ENCODE measurements at regions of chr10 and their contacts with region 1.

Region 1: DNA sequence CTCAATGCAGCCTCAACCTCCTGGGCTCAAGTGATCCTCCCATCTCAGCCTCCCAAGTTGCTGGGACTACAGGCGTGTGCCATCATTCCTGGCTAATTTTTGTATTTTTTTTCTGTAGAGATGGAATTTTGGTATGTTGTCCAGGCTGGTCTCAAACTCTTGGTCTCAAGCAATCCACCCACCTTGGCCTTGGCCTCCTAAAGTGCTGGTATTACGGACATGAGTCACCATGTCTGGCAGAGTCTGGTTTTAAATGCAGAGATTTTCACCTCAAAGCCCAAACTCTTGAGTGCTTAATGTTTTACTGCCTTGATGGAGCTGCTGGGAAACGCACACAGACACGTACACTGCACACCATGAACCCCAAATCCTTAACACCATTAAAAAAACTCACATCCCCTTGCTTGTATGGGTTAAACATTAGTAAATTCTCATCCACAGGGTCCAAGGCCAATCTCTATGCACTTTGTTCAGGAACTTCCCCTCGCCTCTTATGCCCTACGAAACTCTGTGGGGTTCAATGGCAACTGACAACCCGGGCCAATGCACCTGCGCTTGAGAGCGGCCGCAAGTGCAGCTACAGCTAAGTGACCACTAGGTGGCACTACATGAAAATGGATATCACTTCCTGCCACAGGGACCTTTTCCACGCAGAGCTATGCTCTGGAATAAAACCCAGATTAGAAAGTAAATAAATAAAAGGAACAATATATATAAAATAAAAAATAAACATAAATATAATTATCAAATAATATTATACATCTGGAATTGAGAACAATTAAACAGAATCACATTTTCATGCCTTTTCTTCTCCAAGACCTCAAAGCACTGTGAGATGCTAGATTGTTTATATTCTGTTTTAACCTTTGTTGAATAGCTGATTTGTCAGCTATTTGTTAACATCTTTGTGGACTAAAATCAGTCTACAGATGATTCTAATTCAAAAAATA is 66.9 kb upstream of the AFAP1L2 start:
- DNase-seq: peak; percentile 46
- H3K4me3 ChIP-seq: no peak overlapping the region
- H3K27ac ChIP-seq: no peak overlapping the region
- H3K27me3 ChIP-seq: peaks cover 2% of the 10 kb centered on the region
- CTCF ChIP-seq: peak; percentile 88

Region 2: DNA sequence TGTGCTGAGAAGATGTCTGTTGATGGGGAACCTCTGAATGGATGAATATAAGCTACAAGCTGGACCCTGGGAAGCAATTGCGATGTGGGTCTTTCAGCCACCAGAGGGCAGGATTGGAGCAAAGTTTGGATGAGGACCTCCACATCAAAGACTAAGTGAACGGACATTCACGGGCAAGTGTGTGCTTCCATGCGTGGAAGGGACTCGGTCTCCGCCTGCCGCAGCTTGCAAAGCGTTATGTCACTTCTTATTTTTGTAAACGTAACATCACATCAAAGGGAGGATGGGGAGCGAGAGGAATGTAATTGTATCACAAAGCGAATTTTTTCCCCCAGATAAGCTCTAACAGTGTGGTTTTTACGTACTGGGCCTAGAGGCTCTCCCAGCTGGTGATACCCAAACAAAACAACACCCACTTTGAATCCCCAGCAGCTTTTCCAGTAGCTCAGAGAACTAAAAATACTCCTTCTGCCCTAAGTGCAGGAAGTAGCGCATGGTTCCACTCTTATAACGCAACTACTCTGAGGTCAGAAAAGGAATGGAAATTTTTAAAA is 167.1 kb before region 1 on chr10:
- CTCF ChIA-PET with region 1: interaction called, 22 read pairs
- POLR2A ChIA-PET with region 1: no interaction called
- DNase-seq: peak; percentile 73
- H3K4me3 ChIP-seq: peak overlapping the region; percentile 44
- H3K27ac ChIP-seq: peak overlapping the region; percentile 57
- H3K27me3 ChIP-seq: peaks cover 14% of the 10 kb centered on the region
- CTCF ChIP-seq: peak; percentile 85

Region 3: GRCh38 chr10:114458955-114459354 is 12.3 kb before region 1 on chr10:
- CTCF ChIA-PET with region 1: interaction called, 20 read pairs
- POLR2A ChIA-PET with region 1: no interaction called
- DNase-seq: no peak
- H3K4me3 ChIP-seq: no peak overlapping the region
- H3K27ac ChIP-seq: no peak overlapping the region
- H3K27me3 ChIP-seq: no peaks in the 10 kb centered on the region
- CTCF ChIP-seq: peak; percentile 20; the same call in 1 of the 2 replicates

Region 4: DNA sequence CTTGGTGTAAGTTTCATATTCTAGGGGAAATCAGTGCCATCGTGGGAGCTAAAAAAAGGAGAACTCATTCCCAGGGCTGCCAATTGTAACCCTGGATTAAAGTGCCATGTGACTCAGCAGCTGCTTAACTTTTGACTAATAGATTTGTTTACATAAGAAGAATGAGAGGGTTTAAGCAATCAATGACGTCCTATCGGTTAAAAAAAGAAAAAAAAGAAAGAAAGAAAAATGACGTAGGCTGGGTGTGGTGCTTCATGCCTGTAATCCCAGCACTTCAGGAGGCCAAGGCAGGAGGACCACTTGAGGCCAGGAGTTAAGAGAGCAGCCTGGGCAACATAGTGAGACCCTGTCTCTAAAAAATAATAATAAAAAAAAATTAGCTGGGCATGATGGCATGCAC is 49.2 kb after region 1 on chr10:
- CTCF ChIA-PET with region 1: interaction called, 16 read pairs
- POLR2A ChIA-PET with region 1: no interaction called
- DNase-seq: no peak
- H3K4me3 ChIP-seq: no peak overlapping the region
- H3K27ac ChIP-seq: no peak overlapping the region
- H3K27me3 ChIP-seq: peaks cover 15% of the 10 kb centered on the region
- CTCF ChIP-seq: no peak

Region 5: DNA sequence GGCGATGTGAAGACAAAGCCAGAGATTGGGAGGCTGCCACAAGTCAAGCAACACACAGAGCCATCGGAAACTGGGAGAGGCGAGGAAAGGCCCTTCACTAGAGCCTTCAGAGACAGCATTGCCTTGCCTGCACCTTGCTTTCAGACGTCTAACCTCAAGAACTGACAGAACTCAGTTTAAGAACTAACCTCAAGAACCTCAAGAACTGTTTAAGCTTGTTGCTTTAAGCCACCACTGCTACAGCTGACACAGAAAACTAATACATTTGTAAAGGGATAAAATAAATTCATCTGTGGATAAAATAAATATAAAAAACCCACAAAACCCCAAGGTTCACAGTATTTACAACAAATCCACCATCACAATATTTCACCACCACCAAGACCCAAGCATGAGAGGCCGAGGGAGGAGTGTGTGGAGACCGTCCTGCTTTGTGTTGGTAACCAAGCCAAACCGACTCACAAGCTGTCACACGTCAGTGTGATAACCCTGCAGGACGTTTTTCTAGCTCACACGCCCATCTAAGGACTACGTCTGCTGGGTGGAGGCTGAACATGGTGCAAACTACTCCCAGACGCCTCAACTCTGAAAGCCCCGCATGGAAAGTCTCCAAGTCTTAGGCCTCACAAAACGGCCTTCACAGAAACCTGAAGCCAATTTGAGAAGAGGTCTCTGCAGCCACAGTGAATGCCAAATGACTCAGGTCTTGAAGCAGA is 70.0 kb after region 1 on chr10:
- CTCF ChIA-PET with region 1: interaction called, 92 read pairs
- POLR2A ChIA-PET with region 1: no interaction called
- DNase-seq: peak; percentile 80
- H3K4me3 ChIP-seq: no peak overlapping the region
- H3K27ac ChIP-seq: no peak overlapping the region
- H3K27me3 ChIP-seq: peaks cover 53% of the 10 kb centered on the region
- CTCF ChIP-seq: no peak

Region 6: GRCh38 chr10:114631666-114632417 is 160.6 kb after region 1 on chr10:
- CTCF ChIA-PET with region 1: no interaction called
- POLR2A ChIA-PET with region 1: no interaction called
- DNase-seq: no peak
- H3K4me3 ChIP-seq: peak overlapping the region; percentile 67
- H3K27ac ChIP-seq: no peak overlapping the region
- H3K27me3 ChIP-seq: no peaks in the 10 kb centered on the region
- CTCF ChIP-seq: no peak

Region 7: GRCh38 chr10:114779803-114780609 is 308.8 kb after region 1 on chr10:
- CTCF ChIA-PET with region 1: interaction called, 12 read pairs
- POLR2A ChIA-PET with region 1: no interaction called
- DNase-seq: peak; percentile 59
- H3K4me3 ChIP-seq: no peak overlapping the region
- H3K27ac ChIP-seq: peak overlapping the region; percentile 62
- H3K27me3 ChIP-seq: no peaks in the 10 kb centered on the region
- CTCF ChIP-seq: no peak

Region 8: GRCh38 chr10:114876602-114877300 is 405.5 kb after region 1 on chr10:
- CTCF ChIA-PET with region 1: interaction called, 18 read pairs
- POLR2A ChIA-PET with region 1: no interaction called
- DNase-seq: no peak
- H3K4me3 ChIP-seq: no peak overlapping the region
- H3K27ac ChIP-seq: no peak overlapping the region
- H3K27me3 ChIP-seq: no peaks in the 10 kb centered on the region
- CTCF ChIP-seq: peak; percentile 88

Measured in AG04450 (cell line).